H1 (cell line): ENCODE measurements at regions of chr1 and their contacts with region 1.

Region 1: DNA sequence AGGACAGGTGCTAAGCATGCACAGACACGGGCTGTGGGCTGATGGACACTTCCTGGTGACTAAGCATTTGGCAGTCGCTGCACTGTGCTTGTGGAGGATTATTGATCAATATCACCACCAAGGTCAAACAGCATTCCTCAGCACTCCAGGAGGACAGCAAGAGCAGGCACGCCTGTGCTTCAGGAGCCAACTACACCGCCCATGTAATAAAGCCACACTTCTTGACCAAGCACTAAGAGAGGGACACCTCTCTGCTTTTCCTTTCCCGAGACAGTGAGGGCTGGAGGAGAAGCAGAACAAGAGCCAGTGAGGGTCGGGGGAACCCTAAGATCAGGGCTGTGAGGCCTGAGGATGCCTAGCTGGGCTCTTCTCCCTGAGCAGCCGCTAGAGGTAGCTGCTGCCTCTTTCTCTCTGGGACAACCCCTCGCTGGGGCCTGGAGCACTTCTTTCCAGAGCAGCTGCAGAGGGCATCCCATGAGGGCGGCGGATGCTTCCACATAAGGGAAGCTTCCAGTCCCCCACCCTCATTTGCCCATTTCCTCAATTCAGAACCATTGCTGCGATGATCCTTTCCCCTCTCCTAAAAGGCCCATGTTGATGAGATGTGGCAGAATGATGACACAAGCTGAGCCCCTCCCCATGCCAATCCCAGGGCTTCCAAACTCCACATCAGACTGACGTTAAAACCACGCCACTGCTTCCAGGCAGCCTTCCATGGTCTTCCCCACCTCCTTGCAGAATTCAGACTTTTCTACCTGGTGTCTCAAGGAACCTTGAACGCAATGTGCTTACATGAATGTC is 19.1 kb downstream of the RAB7B start:
- DNase-seq: peak in 1 of 2 experiments; percentile 72
- H3K4me3 ChIP-seq: no peak overlapping the region
- H3K27ac ChIP-seq: no peak overlapping the region
- H3K4me1 ChIP-seq: no peaks in the 10 kb centered on the region; a peak in 2 of 7 replicates
- H3K27me3 ChIP-seq: no peaks in the 10 kb centered on the region
- CTCF ChIP-seq: peak; percentile 80 to 94 (median 92)
- EP300 ChIP-seq: no peak
- POLR2A ChIP-seq: no peak
- RAD21 ChIP-seq: peak; percentile 85 to 93

Region 2: GRCh38 chr1:205967555-205968335 is 16.4 kb before region 1 on chr1:
- CTCF ChIA-PET with region 1: interaction called, 37 read pairs
- POLR2A ChIA-PET with region 1: interaction called, 3 read pairs
- DNase-seq: no peak
- H3K4me3 ChIP-seq: no peak overlapping the region
- H3K27ac ChIP-seq: no peak overlapping the region
- H3K4me1 ChIP-seq: peaks cover 0 to 9% (median 3%) of the 10 kb centered on the region in 4 experiments; a peak in 4 of 7 replicates
- H3K27me3 ChIP-seq: no peaks in the 10 kb centered on the region
- CTCF ChIP-seq: no peak
- EP300 ChIP-seq: no peak
- POLR2A ChIP-seq: no peak
- RAD21 ChIP-seq: no peak

Region 3: DNA sequence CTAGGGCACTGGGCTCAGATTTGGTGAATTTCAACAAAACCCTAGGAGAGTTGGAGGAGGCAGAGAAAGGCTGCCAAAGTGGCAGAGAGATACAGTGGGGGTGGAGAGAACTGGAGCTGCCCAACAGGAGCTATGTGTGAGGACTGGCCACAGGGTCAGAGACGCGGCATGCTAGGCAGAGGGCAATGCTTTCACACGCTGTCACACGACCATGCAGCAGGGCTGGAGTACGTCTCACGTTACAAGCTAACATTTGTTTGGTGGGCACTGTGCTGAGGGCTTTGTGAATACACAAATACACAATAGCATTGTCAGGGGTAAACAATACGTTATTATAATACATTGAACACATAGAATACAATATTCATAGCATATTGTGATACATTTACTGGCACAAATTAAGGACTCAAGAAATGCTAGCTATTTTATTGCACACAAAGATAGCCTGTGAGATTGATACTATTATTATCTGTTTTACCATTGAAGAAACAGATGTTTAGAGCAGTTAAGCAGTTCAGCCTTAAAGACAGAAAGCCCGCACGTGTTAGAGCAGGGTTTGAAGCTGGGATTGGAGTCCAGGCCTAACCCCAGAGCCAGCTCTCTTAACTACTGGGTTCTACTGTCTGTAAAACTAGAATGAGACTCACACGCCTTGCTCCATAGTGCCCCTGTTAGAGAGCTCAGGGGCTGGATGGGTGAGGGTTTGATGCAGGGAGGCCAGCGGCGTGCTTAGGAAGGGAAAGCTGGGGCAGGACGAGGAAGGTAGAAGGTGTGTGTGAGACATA is 14.5 kb after region 1 on chr1:
- CTCF ChIA-PET with region 1: interaction called, 37 read pairs
- POLR2A ChIA-PET with region 1: no interaction called
- DNase-seq: no peak
- H3K4me3 ChIP-seq: no peak overlapping the region
- H3K27ac ChIP-seq: no peak overlapping the region
- H3K4me1 ChIP-seq: peaks cover 0 to 7% (median 3%) of the 10 kb centered on the region in 4 experiments; a peak in 3 of 7 replicates
- H3K27me3 ChIP-seq: peaks cover 6 to 22% (median 17%) of the 10 kb centered on the region in 4 experiments
- CTCF ChIP-seq: no peak
- EP300 ChIP-seq: no peak
- POLR2A ChIP-seq: no peak
- RAD21 ChIP-seq: no peak